ENCODE measurements at regions of chr17 and their contacts with region 1.

Region 1: GRCh38 chr17:75749545-75750389 is 15.2 kb downstream of the GALK1 start:
- ATAC-seq: peak; percentile 46 to 75 (median 62)
- H3K4me3 ChIP-seq: no peak overlapping the region
- H3K27ac ChIP-seq: no peak overlapping the region
- H3K4me1 ChIP-seq: peaks cover 0 to 5% of the 10 kb centered on the region in 2 donors

Region 2: DNA sequence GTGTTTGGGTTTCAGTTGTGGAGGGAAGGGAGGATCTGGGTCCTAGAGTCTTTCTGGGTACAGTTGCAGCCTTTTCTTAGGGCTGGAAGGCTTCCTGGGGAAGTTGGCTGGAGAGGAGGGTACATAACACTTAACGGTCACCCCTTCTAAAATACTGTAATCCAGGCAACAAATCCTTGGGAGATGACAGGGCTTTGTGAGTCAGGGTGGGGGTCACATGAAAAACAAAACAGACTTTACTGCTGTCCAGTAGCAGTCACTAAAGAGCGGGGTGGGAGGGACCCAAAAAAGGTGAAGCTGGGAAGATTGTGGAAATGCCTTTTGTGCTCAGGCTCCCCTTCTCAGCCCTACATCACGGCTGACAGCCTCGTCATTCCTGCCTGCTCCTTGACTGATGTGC is 76.3 kb before region 1 on chr17:
- in situ Hi-C with region 1: loop called in 3 of 9 experiments (anchors 5 to 10 kb)
- ATAC-seq: no peak
- H3K4me3 ChIP-seq: no peak overlapping the region
- H3K27ac ChIP-seq: no peak overlapping the region
- H3K4me1 ChIP-seq: peaks cover 0 to 2% of the 10 kb centered on the region in 2 donors

Region 3: DNA sequence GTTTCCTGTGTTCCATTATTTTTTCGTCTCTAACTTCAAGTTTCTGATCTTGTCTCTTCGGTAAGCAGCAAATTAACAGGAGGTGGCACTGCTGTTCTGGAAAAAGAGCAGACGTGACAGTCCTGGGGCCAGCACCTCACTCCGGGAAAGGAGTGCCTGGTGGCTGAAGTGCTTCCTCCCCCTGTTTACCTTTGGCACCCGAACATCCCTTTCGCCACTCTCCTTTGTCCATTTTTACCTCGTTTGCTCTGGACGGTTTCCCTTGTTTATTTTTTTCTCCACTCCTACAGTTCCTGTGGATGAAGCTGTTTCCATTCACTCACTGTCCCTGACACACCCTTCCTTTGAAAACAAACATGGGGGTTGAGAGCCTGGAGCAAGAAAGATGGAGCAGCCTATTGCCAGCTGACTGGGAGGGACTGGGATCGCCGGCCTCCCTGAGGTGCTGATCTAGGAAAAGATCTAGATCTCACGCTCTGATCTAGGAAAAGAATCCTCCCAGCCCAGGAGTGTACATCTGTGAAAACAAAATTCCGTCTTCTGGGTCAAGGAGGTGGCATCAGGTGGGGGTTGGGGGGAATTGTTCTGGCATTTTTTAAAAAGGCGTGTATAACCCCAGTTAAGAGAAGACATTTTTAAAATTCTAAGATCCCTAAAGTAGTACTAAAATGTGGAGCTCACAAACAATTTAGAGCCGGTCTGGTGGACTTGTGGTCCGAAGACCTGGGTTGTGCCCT is 69.9 kb before region 1 on chr17:
- in situ Hi-C with region 1: loop called in 1 of 9 experiments (anchors 10 kb)
- ATAC-seq: peak in 4 of 8 experiments; percentile 35 to 84 (median 71)
- H3K4me3 ChIP-seq: no peak overlapping the region
- H3K27ac ChIP-seq: no peak overlapping the region
- H3K4me1 ChIP-seq: no peaks in the 10 kb centered on the region

Measured in motor neuron (in vitro differentiated cells).